ENCODE measurements at regions of chr20 and their contacts with region 1.

Region 1: GRCh38 chr20:41411391-41411847 is 44.8 kb upstream of the EMILIN3 start:
- DNase-seq: no peak
- ATAC-seq: peak; percentile 80 to 90 (median 80)
- H3K4me3 ChIP-seq: no peak overlapping the region
- H3K27ac ChIP-seq: peak overlapping the region; percentile 81
- H3K4me1 ChIP-seq: peaks cover 53% of the 10 kb centered on the region
- H3K27me3 ChIP-seq: no peaks in the 10 kb centered on the region
- CTCF ChIP-seq: peak; percentile 53

Region 2: GRCh38 chr20:41173161-41173721 is 238.2 kb before region 1 on chr20:
- intact Hi-C with region 1: loop called in 1 of 2 experiments (anchors 5 kb)
- DNase-seq: peak; percentile 88 to 93
- ATAC-seq: peak; percentile 83 to 89 (median 86)
- H3K4me3 ChIP-seq: no peak overlapping the region
- H3K27ac ChIP-seq: peak overlapping the region; percentile 71
- H3K4me1 ChIP-seq: peaks cover 53% of the 10 kb centered on the region
- H3K27me3 ChIP-seq: no peaks in the 10 kb centered on the region
- CTCF ChIP-seq: peak; percentile 98

Region 3: GRCh38 chr20:41469868-41470267 is 58.4 kb after region 1 on chr20:
- intact Hi-C with region 1: loop called in 1 of 2 experiments (anchors 5 kb)
- DNase-seq: no peak
- ATAC-seq: peak in 2 of 4 donors; percentile 23 to 44
- H3K4me3 ChIP-seq: no peak overlapping the region
- H3K27ac ChIP-seq: no peak overlapping the region
- H3K4me1 ChIP-seq: peaks cover 15% of the 10 kb centered on the region
- H3K27me3 ChIP-seq: no peaks in the 10 kb centered on the region
- CTCF ChIP-seq: no peak

Region 4: GRCh38 chr20:41678799-41679198 is 267.4 kb after region 1 on chr20:
- intact Hi-C with region 1: no loop called
- DNase-seq: no peak
- ATAC-seq: no peak
- H3K4me3 ChIP-seq: no peak overlapping the region
- H3K27ac ChIP-seq: no peak overlapping the region
- H3K4me1 ChIP-seq: no peaks in the 10 kb centered on the region
- H3K27me3 ChIP-seq: no peaks in the 10 kb centered on the region
- CTCF ChIP-seq: no peak